ENCODE measurements at regions of chr11 and their contacts with region 1.

Region 1: GRCh38 chr11:65859200-65859811 is 927 bp upstream of the MUS81 start:
- DNase-seq: peak; percentile 100
- ATAC-seq: peak; percentile 71
- H3K4me3 Mint-ChIP-seq: peak overlapping the region; percentile 91
- H3K27ac Mint-ChIP-seq: peak overlapping the region; percentile 99
- H3K4me1 Mint-ChIP-seq: peaks cover 50% of the 10 kb centered on the region
- H3K27me3 Mint-ChIP-seq: no peaks in the 10 kb centered on the region

Region 2: GRCh38 chr11:65540297-65541092 is 318.8 kb before region 1 on chr11:
- CTCF ChIA-PET with region 1: no interaction called
- DNase-seq: peak; percentile 96
- ATAC-seq: peak; percentile 94
- H3K4me3 Mint-ChIP-seq: peak overlapping the region; percentile 81
- H3K27ac Mint-ChIP-seq: peak overlapping the region; percentile 82
- H3K4me1 Mint-ChIP-seq: peaks cover 9% of the 10 kb centered on the region
- H3K27me3 Mint-ChIP-seq: no peaks in the 10 kb centered on the region

Region 3: GRCh38 chr11:65833297-65834030 is 25.8 kb before region 1 on chr11 and contains the start of gene SNX32:
- CTCF ChIA-PET with region 1: interaction called, 24 read pairs
- DNase-seq: peak; percentile 97
- ATAC-seq: peak; percentile 100
- H3K4me3 Mint-ChIP-seq: no peak within 1 kb of the TSS
- H3K27ac Mint-ChIP-seq: peak within 1 kb of the TSS; percentile 31
- H3K4me1 Mint-ChIP-seq: peaks cover 15% of the 10 kb centered on the region
- H3K27me3 Mint-ChIP-seq: peaks cover 28% of the 10 kb centered on the region
- total RNA-seq, gene SNX32: 1.7 to 2.4 TPM

Region 4: GRCh38 chr11:65873318-65874156 is 14.2 kb after region 1 on chr11:
- CTCF ChIA-PET with region 1: interaction called, 710 read pairs
- DNase-seq: peak; percentile 96
- ATAC-seq: peak; percentile 93
- H3K4me3 Mint-ChIP-seq: peak overlapping the region; percentile 79
- H3K27ac Mint-ChIP-seq: peak overlapping the region; percentile 73
- H3K4me1 Mint-ChIP-seq: peaks cover 53% of the 10 kb centered on the region
- H3K27me3 Mint-ChIP-seq: peaks cover 4% of the 10 kb centered on the region